ENCODE measurements at regions of chr11 and their contacts with region 1.

Region 1: DNA sequence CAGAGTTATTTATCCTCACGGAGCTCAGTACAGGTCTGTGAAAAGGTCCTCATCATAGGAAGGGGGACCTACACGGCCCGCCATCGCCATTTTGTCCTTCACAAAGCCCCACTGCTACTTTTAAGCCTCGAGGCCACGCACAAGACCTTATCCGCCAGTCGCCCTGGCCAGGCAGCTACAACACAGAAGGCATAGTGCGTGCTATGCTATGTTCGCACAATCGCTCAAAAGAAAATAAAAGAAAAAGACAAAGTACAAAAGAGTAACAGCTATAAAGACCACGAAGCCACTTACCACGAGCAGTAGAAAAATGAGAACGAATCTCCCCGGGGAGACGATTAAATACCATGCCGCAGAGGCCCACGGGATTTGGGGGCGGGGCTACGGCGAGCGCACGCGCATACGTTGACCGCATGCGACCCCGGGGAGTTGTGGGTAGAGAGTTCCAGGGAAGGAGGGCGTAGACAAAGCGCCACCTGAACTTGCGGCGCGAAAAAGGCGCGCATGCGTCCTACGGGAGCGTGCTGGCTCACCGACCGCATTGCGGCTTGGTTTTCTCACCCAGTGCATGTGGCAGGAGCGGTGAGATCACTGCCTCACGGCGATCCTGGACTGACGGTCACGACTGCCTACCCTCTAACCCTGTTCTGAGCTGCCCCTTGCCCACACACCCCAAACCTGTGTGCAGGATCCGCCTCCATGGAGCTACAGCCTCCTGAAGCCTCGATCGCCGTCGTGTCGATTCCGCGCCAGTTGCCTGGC is 16.4 kb upstream of the WDR74 start:
- DNase-seq: peak; percentile 95
- CTCF ChIP-seq: no peak

Region 2: DNA sequence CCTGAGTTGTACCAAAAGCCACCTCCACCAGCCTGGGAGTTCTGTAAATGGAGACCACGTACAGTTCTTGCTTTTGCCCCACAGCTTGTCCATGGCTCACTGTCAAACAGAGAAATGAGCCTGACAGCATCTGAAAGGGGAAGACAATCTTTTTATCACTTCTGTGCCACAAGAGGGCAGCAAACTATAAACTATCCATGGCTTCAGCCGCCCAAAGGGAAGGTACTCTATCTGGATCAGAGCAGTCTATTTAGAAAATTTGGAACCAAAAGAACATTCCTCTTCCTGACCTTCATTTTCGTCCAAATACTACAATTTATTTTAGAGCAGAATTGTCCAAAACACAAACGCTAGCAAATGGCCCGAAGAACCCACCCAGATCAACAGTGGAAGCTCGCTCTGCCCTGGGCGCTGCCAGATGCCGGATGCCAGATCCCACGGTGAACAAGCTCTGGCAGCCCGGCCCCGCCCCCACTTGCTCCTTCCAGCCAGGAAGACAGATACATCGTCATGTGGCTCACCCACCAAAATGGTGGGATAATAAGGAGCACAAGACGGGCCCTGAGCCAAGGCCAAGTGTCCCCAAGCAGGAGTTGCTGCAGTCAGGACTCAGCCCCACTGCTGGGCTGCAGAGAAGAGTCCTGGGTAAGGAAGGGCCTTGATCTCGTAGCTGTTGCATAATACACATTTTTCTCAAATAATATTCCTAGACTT is 460.8 kb before region 1 on chr11:
- in situ Hi-C with region 1: loop called (anchors 25 kb)
- DNase-seq: peak; percentile 84
- CTCF ChIP-seq: peak; percentile 66

Region 3: GRCh38 chr11:62816557-62816956 is 39.2 kb before region 1 on chr11:
- in situ Hi-C with region 1: no loop called
- DNase-seq: no peak
- CTCF ChIP-seq: no peak